BJ (cell line): ENCODE measurements at regions of chr3 and their contacts with region 1.

Region 1: GRCh38 chr3:52934630-52935530 is 37.5 kb upstream of the STIMATE start:
- DNase-seq: peak; percentile 4
- H3K4me3 ChIP-seq: no peak overlapping the region
- H3K27me3 ChIP-seq: no peaks in the 10 kb centered on the region
- CTCF ChIP-seq: peak; percentile 87

Region 2: GRCh38 chr3:52770496-52771333 is 164.2 kb before region 1 on chr3 and contains the start of gene NEK4:
- CTCF ChIA-PET with region 1: no interaction called
- POLR2A ChIA-PET with region 1: no interaction called
- DNase-seq: peak; percentile 43
- H3K4me3 ChIP-seq: peak within 1 kb of the TSS; percentile 66
- H3K27me3 ChIP-seq: no peaks in the 10 kb centered on the region
- CTCF ChIP-seq: no peak
- polyA plus RNA-seq, gene NEK4: 10.0 and 14.5 TPM in 2 replicates

Region 3: DNA sequence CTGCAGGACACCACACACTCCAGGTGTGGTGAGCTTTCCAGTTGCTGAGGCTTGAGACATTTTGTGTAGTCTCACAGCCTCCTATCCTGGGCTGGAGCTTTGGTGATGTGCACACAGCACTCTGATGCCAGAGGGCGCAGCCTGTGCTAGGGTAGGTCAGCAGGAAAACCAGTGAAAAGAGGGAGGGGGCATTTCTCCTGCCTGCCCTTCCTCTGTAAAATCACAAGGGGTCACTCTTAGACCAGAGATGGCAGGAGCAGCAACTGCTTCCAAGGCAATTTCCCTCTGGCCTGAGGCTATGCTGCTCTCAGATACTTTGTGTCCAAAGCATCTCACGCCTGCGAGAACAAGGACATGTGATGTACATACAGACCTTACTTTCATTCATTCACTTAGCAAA is 83.5 kb before region 1 on chr3:
- CTCF ChIA-PET with region 1: interaction called, 16 read pairs
- POLR2A ChIA-PET with region 1: no interaction called
- DNase-seq: no peak
- H3K4me3 ChIP-seq: no peak overlapping the region
- H3K27me3 ChIP-seq: no peaks in the 10 kb centered on the region
- CTCF ChIP-seq: peak; percentile 68

Region 4: GRCh38 chr3:53049987-53050386 is 115.1 kb after region 1 on chr3:
- CTCF ChIA-PET with region 1: no interaction called
- POLR2A ChIA-PET with region 1: interaction called, 11 read pairs
- DNase-seq: no peak
- H3K4me3 ChIP-seq: no peak overlapping the region
- H3K27me3 ChIP-seq: no peaks in the 10 kb centered on the region
- CTCF ChIP-seq: no peak

Region 5: GRCh38 chr3:53069422-53070068 is 134.7 kb after region 1 on chr3:
- CTCF ChIA-PET with region 1: no interaction called
- POLR2A ChIA-PET with region 1: no interaction called
- DNase-seq: no peak
- H3K4me3 ChIP-seq: no peak overlapping the region
- H3K27me3 ChIP-seq: peaks cover 4% of the 10 kb centered on the region; the same call in 1 of the 2 replicates
- CTCF ChIP-seq: no peak